ENCODE measurements at regions of chr19 and their contacts with region 1.

Region 1: DNA sequence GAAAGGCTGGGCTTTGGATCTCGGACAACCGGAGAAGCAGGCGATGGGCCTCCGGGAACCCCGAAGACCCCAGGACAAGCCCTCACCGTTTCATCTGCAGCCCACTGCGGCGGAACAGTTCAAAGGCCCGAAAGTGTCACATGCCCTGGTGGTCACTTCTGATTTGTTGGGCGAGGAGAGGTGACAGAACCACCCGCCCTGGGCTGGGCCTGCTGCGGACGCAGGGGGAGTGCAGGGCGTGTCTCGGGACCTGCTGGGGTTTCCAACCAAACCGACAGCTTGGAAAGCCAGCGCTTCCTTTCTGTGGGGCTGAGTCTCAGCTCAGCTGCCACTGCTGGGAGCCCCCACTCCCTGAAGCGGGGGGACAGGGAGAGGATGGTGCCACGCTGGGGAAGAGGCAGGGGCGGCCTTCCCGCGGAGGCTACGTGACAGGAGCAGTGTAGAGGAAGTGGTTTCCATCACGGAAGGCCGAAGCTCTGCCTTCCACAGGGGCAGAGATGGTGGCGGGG is 22.8 kb upstream of the ZBTB7A start:
- DNase-seq: peak; percentile 81
- H3K4me3 Mint-ChIP-seq: peak overlapping the region; percentile 68
- H3K27ac Mint-ChIP-seq: peak overlapping the region; percentile 98
- H3K4me1 Mint-ChIP-seq: peaks cover 59% of the 10 kb centered on the region
- H3K27me3 Mint-ChIP-seq: no peaks in the 10 kb centered on the region

Region 2: DNA sequence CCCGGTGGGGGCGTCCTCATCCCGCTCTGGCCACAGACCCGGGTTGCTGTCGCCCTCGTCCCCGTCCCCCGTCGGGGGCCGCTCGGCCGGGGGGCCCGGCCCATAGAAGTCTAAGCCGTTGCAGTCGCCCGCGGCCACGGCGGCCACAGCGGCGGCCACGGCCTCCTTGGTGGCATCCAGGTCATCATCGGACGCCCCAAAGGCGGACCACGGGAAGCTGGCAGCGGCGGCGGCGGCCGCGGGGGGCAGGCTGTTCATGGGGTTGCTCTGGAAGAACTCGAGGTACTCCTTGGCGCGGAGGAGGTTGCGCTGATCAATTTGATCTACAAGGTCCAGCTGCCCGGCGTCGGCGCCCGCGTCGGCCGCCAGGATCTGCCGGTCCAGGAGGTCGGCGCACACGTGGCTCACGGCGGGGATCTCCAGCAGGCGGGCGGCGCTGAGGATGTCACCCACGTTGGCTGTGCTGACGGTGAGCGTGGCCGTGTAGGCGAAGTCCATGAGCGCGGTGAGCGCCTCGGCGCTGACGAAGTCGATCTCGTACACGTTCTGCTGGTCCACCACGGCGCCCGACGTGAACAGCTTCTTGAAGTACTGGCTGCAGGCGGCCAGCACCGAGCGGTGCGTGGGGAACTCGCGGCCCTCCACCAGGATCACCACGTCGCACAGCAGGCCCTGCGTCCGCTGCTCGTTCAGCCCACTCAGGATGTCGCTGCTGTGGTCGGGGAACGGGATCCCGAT is 34.8 kb before region 1 on chr19:
- CTCF ChIA-PET with region 1: no interaction called
- POLR2A ChIA-PET with region 1: no interaction called
- DNase-seq: no peak
- H3K4me3 Mint-ChIP-seq: no peak overlapping the region
- H3K27ac Mint-ChIP-seq: no peak overlapping the region
- H3K4me1 Mint-ChIP-seq: peaks cover 43% of the 10 kb centered on the region
- H3K27me3 Mint-ChIP-seq: no peaks in the 10 kb centered on the region

Region 3: GRCh38 chr19:4065430-4066175 is 23.9 kb before region 1 on chr19:
- CTCF ChIA-PET with region 1: interaction called, 5 read pairs
- POLR2A ChIA-PET with region 1: interaction called, 23 read pairs
- DNase-seq: peak; percentile 97
- H3K4me3 Mint-ChIP-seq: peak overlapping the region; percentile 65
- H3K27ac Mint-ChIP-seq: peak overlapping the region; percentile 63
- H3K4me1 Mint-ChIP-seq: peaks cover 46% of the 10 kb centered on the region
- H3K27me3 Mint-ChIP-seq: no peaks in the 10 kb centered on the region

Region 4: DNA sequence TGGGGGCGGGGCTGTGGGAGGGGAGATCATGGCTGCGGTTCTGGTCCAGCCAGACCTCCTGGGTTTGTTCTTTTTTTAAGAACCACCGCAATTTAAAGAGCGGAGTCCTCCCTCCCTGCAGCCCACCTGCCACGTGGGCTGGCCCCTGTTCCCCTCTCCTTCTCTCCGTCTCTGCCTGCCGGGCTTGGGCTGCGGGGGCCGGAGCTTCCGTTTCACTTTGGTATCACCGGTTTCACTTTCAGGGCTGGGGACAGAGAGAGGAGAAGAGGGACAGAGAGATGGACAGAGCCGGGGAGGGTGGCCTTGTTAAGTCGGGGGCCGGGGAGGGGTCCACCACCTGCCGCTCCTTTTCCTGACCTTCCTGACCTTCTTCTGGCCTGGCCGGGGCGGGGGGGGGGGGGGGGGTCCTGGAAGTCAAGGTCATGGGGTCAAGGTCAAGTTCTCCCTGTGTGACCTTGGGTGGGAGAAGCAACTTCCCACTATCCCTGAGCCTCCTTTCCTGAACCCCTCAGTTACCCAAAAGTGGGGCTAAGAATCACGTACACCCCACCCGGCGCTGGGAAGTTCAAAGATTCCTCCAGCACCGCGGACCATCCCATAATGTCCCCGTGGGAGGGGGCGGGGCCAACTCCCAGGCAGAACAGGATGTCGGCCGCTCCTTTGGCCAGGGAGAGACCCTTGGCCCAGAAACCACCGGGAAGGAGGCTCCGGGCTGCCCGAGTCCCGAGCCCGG is 11.4 kb before region 1 on chr19:
- CTCF ChIA-PET with region 1: interaction called, 4 read pairs
- POLR2A ChIA-PET with region 1: interaction called, 13 read pairs
- DNase-seq: peak; percentile 66
- H3K4me3 Mint-ChIP-seq: peak overlapping the region; percentile 58
- H3K27ac Mint-ChIP-seq: peak overlapping the region; percentile 71
- H3K4me1 Mint-ChIP-seq: peaks cover 54% of the 10 kb centered on the region
- H3K27me3 Mint-ChIP-seq: no peaks in the 10 kb centered on the region

Region 5: DNA sequence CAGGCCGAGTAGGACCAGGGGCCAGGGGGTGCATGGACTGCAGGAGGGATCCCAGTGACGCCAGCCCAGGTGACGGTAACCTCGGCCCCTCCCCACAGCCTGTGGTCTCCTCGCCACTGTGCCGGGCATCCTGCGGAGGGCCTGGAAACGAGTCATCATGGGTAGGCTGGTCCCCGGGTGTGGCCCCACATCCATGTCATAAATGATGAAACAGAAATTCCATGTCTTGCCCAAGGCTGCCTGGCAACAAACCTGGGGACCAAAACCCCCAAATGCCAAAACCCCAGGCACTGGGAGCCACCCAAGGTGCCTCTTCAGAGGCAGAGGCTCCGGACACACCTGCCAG is 13.6 kb after region 1 on chr19:
- CTCF ChIA-PET with region 1: interaction called, 3 read pairs
- POLR2A ChIA-PET with region 1: interaction called, 49 read pairs
- DNase-seq: peak; percentile 57
- H3K4me3 Mint-ChIP-seq: no peak overlapping the region
- H3K27ac Mint-ChIP-seq: peak overlapping the region; percentile 97
- H3K4me1 Mint-ChIP-seq: peaks cover 44% of the 10 kb centered on the region
- H3K27me3 Mint-ChIP-seq: no peaks in the 10 kb centered on the region

Region 6: DNA sequence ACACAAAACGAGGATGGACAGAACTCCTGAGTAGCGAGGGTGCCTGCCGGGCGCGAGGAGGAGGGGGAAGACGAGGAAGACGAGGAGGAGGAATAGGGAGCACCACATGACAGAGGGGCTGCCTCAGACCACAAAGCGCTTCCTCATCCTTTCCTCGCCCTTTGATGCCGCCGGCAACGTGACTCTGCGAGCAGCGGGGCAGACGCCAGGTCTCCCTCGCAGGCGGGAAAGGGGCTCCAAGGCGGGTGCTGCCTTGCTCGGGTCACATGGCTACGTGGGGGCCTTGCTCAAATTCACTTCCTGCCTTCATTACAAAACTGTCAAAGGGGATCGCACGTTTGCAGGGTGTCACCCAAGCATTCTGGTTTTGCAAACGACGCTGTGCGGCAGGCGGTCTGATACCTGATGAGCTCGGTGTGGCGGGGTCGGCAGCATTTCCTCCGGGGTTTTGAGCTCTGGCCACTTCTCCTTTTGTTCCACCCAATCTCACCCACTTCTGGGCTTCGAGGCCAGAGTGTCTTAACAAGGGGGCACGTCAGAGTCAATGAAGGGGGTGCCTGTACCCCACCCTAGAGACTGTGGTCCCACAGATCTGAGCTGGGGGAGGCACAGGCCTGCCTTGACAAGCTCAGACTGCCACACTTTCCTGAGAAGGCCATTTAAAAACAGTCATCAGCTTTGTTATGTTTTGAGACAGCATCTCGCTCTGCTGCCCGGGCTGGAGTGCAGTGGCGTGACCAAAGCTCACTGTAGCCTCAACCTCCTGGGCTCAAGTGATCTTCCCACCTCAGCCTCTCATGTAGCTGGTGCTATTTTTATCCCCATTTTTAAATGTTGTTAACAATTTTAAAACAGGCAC is 19.5 kb after region 1 on chr19:
- CTCF ChIA-PET with region 1: interaction called, 3 read pairs
- POLR2A ChIA-PET with region 1: interaction called, 49 read pairs
- DNase-seq: peak; percentile 74
- H3K4me3 Mint-ChIP-seq: peak overlapping the region; percentile 32
- H3K27ac Mint-ChIP-seq: peak overlapping the region; percentile 95
- H3K4me1 Mint-ChIP-seq: peaks cover 65% of the 10 kb centered on the region
- H3K27me3 Mint-ChIP-seq: no peaks in the 10 kb centered on the region